ENCODE measurements at regions of chr2 and their contacts with region 1.

Region 1: GRCh38 chr2:177164584-177165052 is 48.0 kb upstream of the HNRNPA3 start:
- DNase-seq: peak; percentile 82
- ATAC-seq: peak; percentile 52
- H3K4me3 ChIP-seq: peak overlapping the region; percentile 29 to 52 (median 52); a peak in 5 of 6 replicates
- H3K27ac ChIP-seq: peak overlapping the region; percentile 81
- H3K4me1 ChIP-seq: peaks cover 65% of the 10 kb centered on the region
- H3K27me3 ChIP-seq: peaks cover 0 to 4% of the 10 kb centered on the region in 2 experiments; a peak in 1 of 5 replicates
- CTCF ChIP-seq: peak; percentile 99
- EP300 ChIP-seq: peak; percentile 54 to 55; a peak in 3 of 4 replicates
- POLR2A ChIP-seq: no peak
- RAD21 ChIP-seq: peak; percentile 98

Region 2: DNA sequence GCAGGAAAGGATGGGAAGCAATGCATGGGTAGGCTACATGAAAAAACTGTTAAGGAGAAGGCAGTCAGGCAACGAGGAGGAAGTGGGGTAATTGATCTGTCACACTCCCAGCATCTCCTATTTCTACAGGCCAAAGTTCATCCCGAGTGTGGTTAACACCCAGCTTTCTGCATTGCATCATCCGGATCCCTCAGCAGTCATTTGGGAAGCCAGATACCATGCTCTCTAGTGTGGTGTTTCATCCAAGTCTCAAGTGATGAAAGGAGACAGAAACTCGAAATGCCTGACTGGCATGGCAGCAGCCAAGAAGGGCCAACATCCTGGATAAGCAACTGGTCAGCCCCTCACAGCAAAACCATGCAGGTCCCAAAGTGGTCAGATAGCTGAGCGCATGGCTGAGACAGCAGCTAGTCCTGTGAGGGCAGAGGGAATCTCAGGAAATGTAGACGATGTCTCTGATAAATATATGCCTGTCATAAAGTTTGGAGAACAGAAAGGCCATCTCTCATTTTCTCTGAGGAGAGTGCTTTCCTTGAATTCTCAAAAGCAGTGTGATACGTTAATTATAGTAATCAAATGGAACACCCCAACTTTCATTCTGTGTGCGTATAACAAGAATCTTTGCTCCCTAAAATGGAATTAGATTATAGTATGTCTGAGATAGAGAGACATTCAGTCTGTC is 23.2 kb after region 1 on chr2:
- CTCF ChIA-PET with region 1: no interaction called
- POLR2A ChIA-PET with region 1: interaction called, 7 read pairs
- in situ Hi-C with region 1: no loop called
- intact Hi-C with region 1: loop called (anchors 1 kb)
- DNase-seq: peak; percentile 95
- ATAC-seq: peak; percentile 83
- H3K4me3 ChIP-seq: peak overlapping the region; percentile 10 to 56 (median 17)
- H3K27ac ChIP-seq: peak overlapping the region; percentile 90
- H3K4me1 ChIP-seq: peaks cover 70% of the 10 kb centered on the region
- H3K27me3 ChIP-seq: no peaks in the 10 kb centered on the region
- CTCF ChIP-seq: no peak
- EP300 ChIP-seq: peak; percentile 39 to 91; a peak in 2 of 4 replicates
- POLR2A ChIP-seq: peak; percentile 66 to 71; a peak in 3 of 4 replicates
- RAD21 ChIP-seq: peak; percentile 6; the same call in 1 of the 2 replicates

Region 3: GRCh38 chr2:177212106-177212890 is 47.7 kb after region 1 on chr2 and contains the start of gene HNRNPA3:
- CTCF ChIA-PET with region 1: no interaction called
- POLR2A ChIA-PET with region 1: interaction called, 36 read pairs
- in situ Hi-C with region 1: loop called (anchors 5 kb)
- intact Hi-C with region 1: loop called (anchors 1 kb)
- DNase-seq: peak; percentile 98
- ATAC-seq: peak; percentile 93
- H3K4me3 ChIP-seq: peak within 1 kb of the TSS; percentile 85 to 86 (median 86)
- H3K27ac ChIP-seq: peak within 1 kb of the TSS; percentile 99
- H3K4me1 ChIP-seq: peaks cover 52% of the 10 kb centered on the region
- H3K27me3 ChIP-seq: no peaks in the 10 kb centered on the region; a peak in 1 of 5 replicates
- CTCF ChIP-seq: peak; percentile 48
- EP300 ChIP-seq: no peak; a peak in 1 of 4 replicates
- POLR2A ChIP-seq: peak; percentile 84 to 98
- RAD21 ChIP-seq: peak; percentile 38; the same call in 1 of the 2 replicates
- total RNA-seq, gene HNRNPA3: 97.7 and 164 TPM in 2 replicates

Region 4: GRCh38 chr2:177296040-177296439 is 131.4 kb after region 1 on chr2:
- CTCF ChIA-PET with region 1: interaction called, 8 read pairs
- POLR2A ChIA-PET with region 1: interaction called, 3 read pairs
- in situ Hi-C with region 1: no loop called
- intact Hi-C with region 1: loop called (anchors 1 kb)
- DNase-seq: peak; percentile 36
- ATAC-seq: peak; percentile 30; the same call in 2 of the 3 replicates
- H3K4me3 ChIP-seq: no peak overlapping the region
- H3K27ac ChIP-seq: no peak overlapping the region
- H3K4me1 ChIP-seq: peaks cover 42% of the 10 kb centered on the region
- H3K27me3 ChIP-seq: no peaks in the 10 kb centered on the region
- CTCF ChIP-seq: peak; percentile 54
- EP300 ChIP-seq: no peak
- POLR2A ChIP-seq: no peak
- RAD21 ChIP-seq: no peak

Region 5: DNA sequence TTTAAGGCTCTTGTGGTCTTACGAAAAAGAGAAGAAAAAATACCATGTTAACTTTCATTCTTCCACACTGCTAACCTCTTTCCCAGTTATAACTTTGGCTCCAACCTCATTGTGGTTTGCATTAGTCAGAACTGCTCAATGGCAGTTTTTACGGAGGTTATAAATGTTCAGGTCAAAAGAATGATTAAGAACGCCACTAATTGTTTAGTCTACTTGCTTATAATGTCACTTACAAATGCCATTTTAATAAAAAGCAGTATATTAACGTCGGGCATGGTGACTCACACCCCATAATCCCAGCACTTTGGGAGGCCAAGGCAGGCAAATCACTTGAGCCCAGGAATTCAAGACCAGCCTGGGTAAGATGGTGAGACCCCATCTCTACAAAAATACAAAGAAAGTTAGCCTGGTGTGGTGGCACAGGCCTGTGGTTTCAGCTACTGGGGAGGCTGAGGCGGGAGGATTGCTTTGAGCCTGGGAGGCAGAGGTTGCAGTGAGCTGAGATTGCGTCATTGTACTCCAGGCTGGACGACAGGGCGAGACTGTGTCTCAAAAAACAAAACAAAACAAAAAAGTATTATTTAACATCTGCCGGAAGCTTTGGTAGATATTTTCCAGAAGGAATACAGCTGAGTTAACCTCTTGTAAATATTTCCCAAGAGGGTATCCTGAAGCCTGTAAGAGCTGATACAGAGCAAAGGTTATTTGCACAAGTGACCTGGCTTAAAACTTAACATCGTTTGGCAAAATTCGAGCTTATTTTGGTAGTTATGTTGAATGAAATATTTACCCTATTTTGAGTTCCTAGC is 233.1 kb after region 1 on chr2:
- CTCF ChIA-PET with region 1: no interaction called
- POLR2A ChIA-PET with region 1: interaction called, 4 read pairs
- in situ Hi-C with region 1: no loop called
- intact Hi-C with region 1: loop called (anchors 5 kb)
- DNase-seq: peak; percentile 97
- ATAC-seq: peak; percentile 68
- H3K4me3 ChIP-seq: peak overlapping the region; percentile 28 to 43 (median 39); a peak in 4 of 6 replicates
- H3K27ac ChIP-seq: peak overlapping the region; percentile 86
- H3K4me1 ChIP-seq: peaks cover 88% of the 10 kb centered on the region
- H3K27me3 ChIP-seq: no peaks in the 10 kb centered on the region; a peak in 1 of 5 replicates
- CTCF ChIP-seq: 0 out of 2 replicates have a peak, but pooled peaks have one; percentile 10
- EP300 ChIP-seq: peak in 1 of 2 experiments; percentile 98; a peak in 2 of 4 replicates
- POLR2A ChIP-seq: no peak
- RAD21 ChIP-seq: peak; percentile 28; the same call in 1 of the 2 replicates

Region 6: DNA sequence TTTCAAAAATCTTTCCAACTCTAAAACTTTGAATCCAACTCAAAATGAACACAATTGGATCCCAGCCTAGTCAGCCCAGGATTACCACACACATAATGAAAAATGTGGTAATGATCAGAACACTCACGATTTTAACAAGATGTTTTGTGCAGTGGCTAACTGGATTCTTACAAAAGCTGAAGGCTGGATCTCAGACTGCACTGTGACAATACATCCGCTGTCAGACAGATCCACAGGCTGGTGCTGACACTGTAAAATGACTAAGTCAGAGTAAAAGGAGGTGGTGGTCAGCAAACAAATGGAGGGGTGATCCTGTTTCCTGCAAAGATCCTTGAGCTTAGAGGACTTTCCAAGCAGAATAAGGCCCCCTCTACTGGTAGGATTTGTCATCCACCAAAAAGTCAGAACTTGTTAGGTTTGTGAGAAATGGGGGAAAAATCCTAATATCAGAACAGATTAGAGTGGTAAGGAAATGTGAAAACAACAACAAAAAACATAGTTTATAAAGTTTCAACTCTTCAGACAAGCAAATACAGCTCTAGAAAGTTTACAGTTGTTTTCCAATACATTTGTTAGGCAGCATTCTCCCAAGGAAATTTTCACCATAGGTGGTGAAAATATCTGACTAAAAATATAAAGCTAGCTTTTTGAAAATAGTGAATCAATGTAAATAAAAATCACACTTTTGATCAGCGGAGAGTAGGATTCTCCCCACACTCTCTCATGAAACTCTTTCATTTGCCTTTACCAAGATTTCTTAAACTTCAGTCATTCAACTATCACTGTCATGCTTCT is 439.9 kb after region 1 on chr2:
- CTCF ChIA-PET with region 1: no interaction called
- POLR2A ChIA-PET with region 1: no interaction called
- in situ Hi-C with region 1: no loop called
- intact Hi-C with region 1: loop called (anchors 5 kb)
- DNase-seq: peak; percentile 76
- ATAC-seq: peak; percentile 70
- H3K4me3 ChIP-seq: peak overlapping the region in 1 of 3 experiments; percentile 5; a peak in 2 of 6 replicates
- H3K27ac ChIP-seq: peak overlapping the region; percentile 5
- H3K4me1 ChIP-seq: peaks cover 65% of the 10 kb centered on the region
- H3K27me3 ChIP-seq: no peaks in the 10 kb centered on the region; a peak in 1 of 5 replicates
- CTCF ChIP-seq: peak; percentile 88
- EP300 ChIP-seq: no peak
- POLR2A ChIP-seq: no peak
- RAD21 ChIP-seq: peak; percentile 78; the same call in 1 of the 2 replicates